Adrenal gland (tissue), 19 donors: ENCODE measurements at regions of chr13 and their contacts with region 1.

Region 1: GRCh38 chr13:48979892-48980291 is 4.2 kb downstream of the FNDC3A start:
- DNase-seq: no peak
- H3K4me3 ChIP-seq: no peak overlapping the region
- H3K27ac ChIP-seq: no peak overlapping the region
- H3K4me1 ChIP-seq: peaks cover 0 to 31% of the 10 kb centered on the region in 2 donors
- H3K27me3 ChIP-seq: no peaks in the 10 kb centered on the region
- CTCF ChIP-seq: no peak
- POLR2A ChIP-seq: no peak

Region 2: DNA sequence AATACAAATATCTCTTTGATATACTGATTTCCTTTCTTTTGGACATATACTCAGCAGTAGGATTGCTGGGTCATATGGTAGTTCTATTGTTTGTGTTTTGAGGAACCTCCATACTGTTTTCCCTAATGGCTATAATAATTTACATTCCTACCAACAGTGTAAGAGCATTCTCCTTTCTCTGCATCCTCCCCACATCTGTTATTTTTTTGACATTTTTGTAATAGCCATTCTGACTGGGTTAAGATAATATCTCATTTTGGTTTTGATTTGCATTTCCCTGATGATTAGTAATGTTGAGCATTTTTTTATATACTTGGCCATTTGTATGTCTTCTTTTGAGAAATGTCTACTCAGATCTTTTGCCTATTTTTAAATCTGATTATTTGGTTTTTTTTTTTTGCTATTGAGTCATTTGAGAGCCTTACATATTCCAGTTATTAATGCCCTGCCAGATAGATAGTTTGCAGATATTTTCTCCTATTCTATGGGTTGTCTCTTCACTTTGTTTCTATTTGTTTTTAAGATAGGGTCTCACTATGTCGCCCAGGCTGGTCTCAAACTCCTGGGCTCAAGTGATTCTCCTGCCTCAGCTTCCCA is 91.5 kb after region 1 on chr13:
- intact Hi-C with region 1: loop called in 1 of 2 experiments (anchors 10 kb)
- DNase-seq: no peak
- H3K4me3 ChIP-seq: no peak overlapping the region
- H3K27ac ChIP-seq: no peak overlapping the region
- H3K4me1 ChIP-seq: no peaks in the 10 kb centered on the region
- H3K27me3 ChIP-seq: no peaks in the 10 kb centered on the region
- CTCF ChIP-seq: no peak
- POLR2A ChIP-seq: no peak

Region 3: GRCh38 chr13:49086711-49087110 is 106.8 kb after region 1 on chr13:
- intact Hi-C with region 1: no loop called
- DNase-seq: no peak
- H3K4me3 ChIP-seq: no peak overlapping the region
- H3K27ac ChIP-seq: peak overlapping the region in 1 of 5 donors; percentile 18
- H3K4me1 ChIP-seq: peaks cover 0 to 13% of the 10 kb centered on the region in 2 donors
- H3K27me3 ChIP-seq: no peaks in the 10 kb centered on the region
- CTCF ChIP-seq: no peak
- POLR2A ChIP-seq: no peak

Region 4: GRCh38 chr13:49530457-49530856 is 550.6 kb after region 1 on chr13:
- intact Hi-C with region 1: no loop called
- DNase-seq: peak in 3 of 7 donors; percentile 25 to 40 (median 27)
- H3K4me3 ChIP-seq: no peak overlapping the region
- H3K27ac ChIP-seq: peak overlapping the region in 1 of 5 donors; percentile 38
- H3K4me1 ChIP-seq: peaks cover 0 to 22% of the 10 kb centered on the region in 2 donors
- H3K27me3 ChIP-seq: no peaks in the 10 kb centered on the region
- CTCF ChIP-seq: no peak
- POLR2A ChIP-seq: no peak